ENCODE measurements at regions of chr12 and their contacts with region 1.

Region 1: DNA sequence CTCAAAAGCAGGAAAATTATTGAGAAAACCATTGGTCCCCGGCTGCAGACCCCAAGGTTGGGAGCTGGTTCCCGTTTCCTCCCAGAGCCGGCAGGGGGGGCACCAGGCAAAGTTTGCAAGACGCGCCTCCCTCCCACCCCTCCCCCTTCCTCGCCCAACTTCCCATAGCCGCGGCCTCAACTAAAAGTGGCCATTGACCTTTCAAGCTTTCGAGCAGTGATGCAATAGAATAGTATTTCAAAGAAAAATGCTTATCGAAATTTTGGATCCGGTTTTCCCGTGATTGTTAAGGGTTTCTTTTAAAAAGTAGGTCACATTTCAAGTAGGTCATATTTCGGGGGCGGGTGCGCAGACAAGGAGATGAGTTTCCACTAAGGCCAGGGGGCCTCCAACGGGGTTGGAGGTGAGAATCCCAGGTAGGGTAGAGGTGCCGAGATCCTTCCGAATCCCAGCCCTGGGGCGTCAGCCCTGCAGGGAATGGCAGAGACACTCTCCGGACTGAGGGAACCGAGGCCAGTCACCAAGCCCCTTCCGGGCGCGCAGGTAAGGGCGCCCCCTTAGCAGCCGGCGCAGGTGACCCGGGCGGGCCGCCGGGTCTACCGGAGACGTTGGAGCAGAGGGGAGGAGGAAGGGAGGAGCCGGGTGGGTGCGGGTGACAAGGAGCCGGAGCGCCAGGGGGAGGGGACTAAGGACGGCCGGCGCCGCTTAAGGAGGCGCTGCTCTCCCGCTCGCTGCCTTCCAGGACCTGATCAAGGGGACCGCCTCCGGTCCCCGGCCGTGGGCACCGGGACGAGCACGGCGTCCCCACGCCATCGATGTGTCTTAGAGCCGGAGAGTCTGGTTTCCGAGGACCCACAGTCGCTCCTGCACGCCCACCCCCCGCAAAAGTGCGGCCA is 2.6 kb upstream of the SOCS2 start:
- DNase-seq: peak; percentile 95
- H3K4me3 ChIP-seq: peak overlapping the region; percentile 68 to 85 (median 80)
- H3K27ac ChIP-seq: peak overlapping the region; percentile 90 to 98 (median 97)
- H3K4me1 ChIP-seq: peaks cover 0 to 18% (median 8%) of the 10 kb centered on the region in 4 donors
- H3K27me3 ChIP-seq: no peaks in the 10 kb centered on the region
- CTCF ChIP-seq: peak; percentile 62 to 85 (median 70)
- EP300 ChIP-seq: no peak
- POLR2A ChIP-seq: no peak

Region 2: DNA sequence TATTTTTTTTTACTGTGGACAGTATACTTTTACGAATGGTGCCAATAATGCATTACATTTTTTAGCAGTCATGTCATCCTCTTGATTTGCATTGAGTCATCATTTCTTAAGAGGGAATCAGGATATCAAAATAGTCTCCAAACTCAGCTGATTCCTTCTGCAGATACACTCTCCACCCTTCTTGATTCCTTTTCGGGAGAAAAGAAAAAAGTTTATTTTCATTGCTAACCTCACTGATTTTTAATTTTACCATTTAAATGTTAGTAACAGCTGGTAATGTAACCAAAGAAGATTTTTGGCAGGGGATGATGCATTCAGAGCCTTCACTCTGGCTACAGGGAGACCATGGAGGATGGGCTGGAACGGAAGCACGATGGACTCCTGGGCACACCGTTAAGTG is 55.1 kb before region 1 on chr12:
- intact Hi-C with region 1: no loop called
- DNase-seq: no peak
- H3K4me3 ChIP-seq: no peak overlapping the region
- H3K27ac ChIP-seq: no peak overlapping the region
- H3K4me1 ChIP-seq: no peaks in the 10 kb centered on the region
- H3K27me3 ChIP-seq: no peaks in the 10 kb centered on the region
- CTCF ChIP-seq: no peak
- EP300 ChIP-seq: no peak
- POLR2A ChIP-seq: no peak

Region 3: GRCh38 chr12:93591137-93591868 is 21.4 kb after region 1 on chr12:
- intact Hi-C with region 1: loop called (anchors 2 kb)
- DNase-seq: peak; percentile 94
- H3K4me3 ChIP-seq: peak overlapping the region; percentile 46 to 58 (median 54)
- H3K27ac ChIP-seq: peak overlapping the region; percentile 80 to 88 (median 84)
- H3K4me1 ChIP-seq: peaks cover 0 to 29% (median 12%) of the 10 kb centered on the region in 4 donors
- H3K27me3 ChIP-seq: no peaks in the 10 kb centered on the region
- CTCF ChIP-seq: no peak
- EP300 ChIP-seq: peak in 1 of 4 donors; percentile 52
- POLR2A ChIP-seq: peak; percentile 38 to 60

Region 4: GRCh38 chr12:93742110-93742934 is 172.4 kb after region 1 on chr12:
- intact Hi-C with region 1: loop called (anchors 1 kb)
- DNase-seq: peak; percentile 82
- H3K4me3 ChIP-seq: peak overlapping the region; percentile 43 to 62 (median 57)
- H3K27ac ChIP-seq: peak overlapping the region; percentile 86 to 94 (median 90)
- H3K4me1 ChIP-seq: peaks cover 0 to 71% (median 50%) of the 10 kb centered on the region in 4 donors
- H3K27me3 ChIP-seq: no peaks in the 10 kb centered on the region
- CTCF ChIP-seq: peak in 2 of 4 experiments; percentile 19 to 32
- EP300 ChIP-seq: peak in 2 of 4 donors; percentile 69 to 75
- POLR2A ChIP-seq: no peak

Region 5: GRCh38 chr12:93825931-93826555 is 256.1 kb after region 1 on chr12:
- intact Hi-C with region 1: loop called (anchors 5 kb)
- DNase-seq: no peak
- H3K4me3 ChIP-seq: peak overlapping the region in 1 of 4 donors; percentile 5
- H3K27ac ChIP-seq: peak overlapping the region; percentile 74 to 91 (median 80)
- H3K4me1 ChIP-seq: peaks cover 0 to 63% (median 54%) of the 10 kb centered on the region in 4 donors
- H3K27me3 ChIP-seq: no peaks in the 10 kb centered on the region
- CTCF ChIP-seq: no peak
- EP300 ChIP-seq: peak in 2 of 4 donors; percentile 37 to 83
- POLR2A ChIP-seq: no peak

Region 6: DNA sequence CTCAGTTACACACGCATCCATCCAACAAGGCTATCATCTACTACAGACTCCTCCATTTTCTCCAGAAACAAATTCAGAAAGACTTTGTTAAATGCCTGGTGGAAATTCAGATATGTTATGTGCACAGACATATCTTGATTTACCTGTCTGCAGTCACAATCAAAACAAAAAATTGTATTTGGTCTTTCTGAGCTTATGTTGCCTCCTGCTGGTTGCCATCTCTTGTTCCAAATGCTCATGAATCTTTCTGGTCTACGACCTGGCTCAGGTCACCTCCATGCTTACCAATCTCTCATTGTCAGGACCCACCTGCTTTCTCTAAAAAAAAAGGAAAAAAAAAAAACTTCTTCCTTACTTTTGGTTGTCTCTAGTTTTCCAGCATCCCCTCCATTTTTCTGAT is 409.3 kb after region 1 on chr12:
- intact Hi-C with region 1: loop called (anchors 2 kb)
- DNase-seq: no peak
- H3K4me3 ChIP-seq: no peak overlapping the region
- H3K27ac ChIP-seq: no peak overlapping the region
- H3K4me1 ChIP-seq: peaks cover 0 to 7% (median 0%) of the 10 kb centered on the region in 4 donors
- H3K27me3 ChIP-seq: no peaks in the 10 kb centered on the region
- CTCF ChIP-seq: peak in 2 of 4 experiments; percentile 29 to 36
- EP300 ChIP-seq: no peak
- POLR2A ChIP-seq: no peak

Region 7: DNA sequence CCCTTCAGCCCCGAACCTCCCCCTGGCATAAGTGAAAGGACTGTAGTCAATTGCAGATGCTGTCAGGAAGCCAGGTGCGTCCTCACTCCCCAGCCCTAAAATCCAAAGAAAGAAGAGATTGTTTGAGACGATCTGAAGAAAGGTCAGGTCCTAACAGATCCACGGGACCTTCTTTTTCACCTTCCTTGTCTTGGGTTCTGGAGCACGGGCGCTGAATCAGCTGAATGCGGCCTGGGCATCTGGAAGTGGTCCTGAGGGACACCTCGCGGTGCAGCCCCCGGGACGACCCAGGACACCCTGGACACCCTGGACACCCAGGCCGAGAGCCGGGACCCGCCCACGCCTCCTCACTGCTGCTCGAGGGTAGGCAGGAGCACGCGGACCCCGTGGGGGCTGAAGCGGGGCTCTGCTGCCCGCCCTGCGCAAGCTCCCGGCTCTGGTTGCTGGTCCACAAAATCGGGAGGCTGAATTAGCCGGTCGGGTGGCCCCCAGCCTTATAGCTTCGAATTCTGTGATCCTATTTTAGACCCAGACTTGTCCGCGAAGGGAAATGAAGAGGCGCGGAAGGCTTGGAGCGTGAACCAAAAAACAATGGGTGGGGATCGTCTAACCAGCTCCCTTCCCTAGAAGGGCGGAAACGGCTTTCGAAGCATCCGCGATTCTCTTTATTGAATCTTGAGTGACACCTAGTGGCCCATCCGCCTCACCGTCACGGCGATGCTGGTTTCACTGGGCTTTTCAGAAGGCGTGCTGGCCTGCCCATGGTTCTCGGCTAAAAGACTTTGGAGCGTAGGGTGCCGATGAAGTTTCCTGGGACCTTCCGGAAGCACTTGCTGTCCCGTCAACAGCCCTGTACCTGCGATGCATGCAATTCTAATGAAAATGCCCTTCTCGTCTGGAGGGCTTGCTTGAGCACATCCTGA is 532.1 kb after region 1 on chr12:
- intact Hi-C with region 1: loop called (anchors 1 kb)
- DNase-seq: peak; percentile 93
- H3K4me3 ChIP-seq: peak overlapping the region; percentile 37 to 70 (median 63)
- H3K27ac ChIP-seq: peak overlapping the region; percentile 44 to 80 (median 62)
- H3K4me1 ChIP-seq: peaks cover 0 to 16% (median 14%) of the 10 kb centered on the region in 4 donors
- H3K27me3 ChIP-seq: no peaks in the 10 kb centered on the region
- CTCF ChIP-seq: peak; percentile 60 to 79 (median 73)
- EP300 ChIP-seq: no peak
- POLR2A ChIP-seq: no peak

Measured in sigmoid colon (tissue), 7 donors.